Dorsolateral prefrontal cortex (tissue), 120 donors: ENCODE measurements at regions of chr6 and their contacts with region 1.

Region 1: DNA sequence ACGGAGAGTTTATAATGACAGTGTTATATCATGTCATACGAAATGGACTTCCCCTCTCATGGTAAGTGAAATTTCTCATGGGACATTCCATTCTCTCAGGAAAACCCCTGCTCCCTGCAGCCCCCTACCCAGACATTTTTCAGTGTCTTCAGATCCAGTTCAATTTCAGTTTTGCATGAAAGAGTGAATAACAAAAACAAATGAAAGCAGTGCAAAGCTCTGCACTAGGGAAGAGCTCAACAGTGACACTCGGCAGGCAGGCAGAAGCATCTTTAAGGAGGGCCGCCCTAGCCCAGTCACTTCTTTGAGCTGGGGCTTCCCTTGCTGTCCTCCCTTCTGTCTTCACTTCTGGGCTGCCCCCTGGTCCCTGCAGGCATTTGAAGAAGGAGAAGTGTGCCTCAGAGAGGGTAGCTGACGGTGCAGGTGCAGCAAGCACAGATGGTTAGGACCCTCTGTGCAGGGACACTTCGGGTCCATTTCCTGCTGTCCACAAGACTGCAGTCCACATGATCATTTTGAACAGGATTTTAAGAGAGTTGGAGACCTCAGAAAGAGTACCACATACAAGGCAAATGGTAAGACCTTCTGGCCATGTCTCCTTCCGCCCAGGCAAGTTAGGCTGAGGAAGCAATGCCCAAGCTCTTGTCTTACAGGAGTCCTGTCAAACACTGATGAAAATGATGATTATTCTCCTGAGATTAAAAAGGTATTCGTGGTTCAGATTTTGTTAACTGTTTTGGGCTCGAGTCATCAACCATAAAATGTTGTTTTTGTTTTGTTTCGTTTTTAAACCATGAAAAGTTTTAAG is 5.4 kb upstream of the DUSP22 start:
- DNase-seq: no peak
- H3K4me3 ChIP-seq: no peak overlapping the region
- H3K27ac ChIP-seq: no peak overlapping the region
- H3K27me3 ChIP-seq: peaks cover 0 to 31% (median 0%) of the 10 kb centered on the region in 45 donors
- CTCF ChIP-seq: no peak

Region 2: DNA sequence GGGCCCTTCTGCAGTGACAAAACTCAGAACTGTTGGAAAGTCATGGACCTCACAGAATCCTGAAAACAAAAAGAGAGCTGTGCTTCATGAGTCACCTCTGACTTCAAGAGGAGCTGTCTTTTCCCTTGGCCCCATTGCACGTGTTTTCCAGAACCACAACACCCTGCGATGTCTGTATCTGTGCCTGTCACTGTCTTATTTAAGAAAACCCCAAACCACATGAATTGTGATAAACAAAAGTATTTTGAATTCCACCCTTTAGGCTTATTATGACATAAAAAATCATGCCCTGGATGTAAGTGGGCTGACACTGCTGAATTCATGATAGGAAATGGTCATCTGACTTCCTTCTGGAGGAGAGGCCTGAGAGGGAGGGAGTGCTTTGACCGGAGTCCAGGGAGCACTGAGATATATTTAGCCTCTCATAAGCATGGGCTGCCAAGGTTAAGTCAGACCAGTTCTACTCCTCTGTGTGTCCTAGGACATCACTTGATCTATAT is 91.0 kb before region 1 on chr6:
- intact Hi-C with region 1: no loop called
- DNase-seq: no peak
- H3K4me3 ChIP-seq: no peak overlapping the region
- H3K27ac ChIP-seq: no peak overlapping the region
- H3K27me3 ChIP-seq: peaks cover 0 to 6% (median 0%) of the 10 kb centered on the region in 45 donors
- CTCF ChIP-seq: no peak

Region 3: GRCh38 chr6:232982-233640 is 53.8 kb before region 1 on chr6:
- intact Hi-C with region 1: loop called in 1 of 2 experiments (anchors 5 kb)
- DNase-seq: no peak
- H3K4me3 ChIP-seq: no peak overlapping the region
- H3K27ac ChIP-seq: no peak overlapping the region
- H3K27me3 ChIP-seq: peaks cover 0 to 4% (median 0%) of the 10 kb centered on the region in 45 donors
- CTCF ChIP-seq: no peak